Activated T-helper 1 cell treated with anti-CD3 and anti-CD28 coated beads, Interleukin-12 subunit alpha, Interleukin-12 subunit beta, Interleukin-2, Interleukin-4 antibody, amounts not matched to agents 30 ng/mL and 10 ng/mL and 1 ng/mL, durations not matched to agents 14 hours and 24 hours and 36 hours (primary cell): ENCODE measurements at regions of chr12 and their contacts with region 1.

Region 1: GRCh38 chr12:102095675-102096263 is 24.1 kb downstream of the NUP37 start:
- DNase-seq: no peak
- H3K4me3 Mint-ChIP-seq: no peak overlapping the region
- H3K27ac Mint-ChIP-seq: no peak overlapping the region
- H3K4me1 Mint-ChIP-seq: peaks cover 16% of the 10 kb centered on the region
- H3K27me3 Mint-ChIP-seq: no peaks in the 10 kb centered on the region

Region 2: DNA sequence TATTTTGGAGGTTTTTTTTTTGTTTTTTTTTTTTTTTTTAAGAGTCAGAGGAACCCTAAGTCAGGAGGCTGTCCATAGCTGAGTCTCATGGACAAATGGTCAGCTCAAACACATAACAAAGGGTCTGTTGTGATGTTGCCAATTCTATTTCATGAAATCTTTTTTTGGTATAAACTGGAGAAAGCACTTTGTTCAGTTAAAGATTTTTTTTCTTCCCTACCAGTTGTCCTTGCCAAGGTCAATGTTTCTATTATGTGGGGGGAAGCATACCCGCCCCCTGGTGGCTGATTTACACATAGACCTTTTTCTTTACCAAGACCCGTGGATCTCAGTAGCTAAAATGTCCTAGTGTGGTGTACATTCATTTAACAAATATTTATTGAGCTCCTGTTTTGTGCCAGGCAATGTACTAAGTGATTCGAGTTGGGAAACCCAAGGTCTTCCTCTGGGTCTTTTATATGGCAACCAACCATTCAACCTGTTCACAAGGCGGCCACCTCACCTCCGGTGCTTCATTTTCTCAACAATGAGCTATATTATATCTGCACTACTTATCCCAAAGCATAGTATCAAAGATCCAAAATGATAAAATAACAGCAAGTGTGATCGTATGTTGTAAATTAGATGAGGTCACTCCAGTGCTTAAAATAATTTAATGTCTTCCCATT is 606.8 kb after region 1 on chr12:
- intact Hi-C with region 1: loop called (anchors 1 kb)
- DNase-seq: peak; percentile 9
- H3K4me3 Mint-ChIP-seq: no peak overlapping the region
- H3K27ac Mint-ChIP-seq: no peak overlapping the region
- H3K4me1 Mint-ChIP-seq: no peaks in the 10 kb centered on the region
- H3K27me3 Mint-ChIP-seq: peaks cover 10% of the 10 kb centered on the region

Region 3: DNA sequence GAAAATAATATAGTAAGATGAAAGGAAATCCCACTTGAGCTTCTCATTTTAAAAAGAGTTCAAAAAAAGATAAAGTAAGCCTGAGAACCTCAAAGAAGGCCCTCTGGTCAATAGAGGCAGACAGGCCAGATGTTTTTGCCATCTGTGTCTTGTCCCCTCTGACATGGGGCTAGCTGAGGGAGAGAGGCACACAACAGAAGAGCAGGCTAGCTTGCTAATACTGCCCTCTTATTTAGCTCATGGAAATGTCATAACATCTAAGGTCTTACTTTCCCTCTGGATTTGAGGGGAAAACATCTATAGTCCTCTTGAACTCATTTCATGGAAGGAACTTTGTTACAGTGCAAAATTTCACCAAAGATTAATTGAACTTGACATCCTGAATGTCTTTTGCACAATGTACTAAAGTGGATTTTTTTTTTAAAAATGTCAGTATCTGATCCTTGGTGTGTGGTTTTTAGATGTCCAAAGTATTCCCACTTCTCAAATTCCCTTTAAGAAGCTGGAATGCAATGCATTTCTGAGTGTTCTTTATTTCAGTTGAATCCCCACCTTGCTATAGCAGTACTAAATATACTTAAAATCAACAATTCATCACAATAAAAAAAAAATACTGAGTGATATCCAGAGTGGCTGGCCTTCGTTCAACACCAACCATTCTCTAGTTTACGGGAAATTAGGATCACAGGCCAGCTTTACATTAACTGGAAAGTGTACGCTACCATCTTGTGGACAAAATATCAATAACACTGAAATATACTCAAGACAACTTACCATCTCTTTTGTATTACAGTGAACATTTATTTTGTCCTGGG is 644.6 kb after region 1 on chr12:
- intact Hi-C with region 1: loop called (anchors 10 kb)
- DNase-seq: no peak
- H3K4me3 Mint-ChIP-seq: no peak overlapping the region
- H3K27ac Mint-ChIP-seq: no peak overlapping the region
- H3K4me1 Mint-ChIP-seq: peaks cover 4% of the 10 kb centered on the region
- H3K27me3 Mint-ChIP-seq: peaks cover under 1% of the 10 kb centered on the region